ENCODE measurements at regions of chr19 and their contacts with region 1.

Region 1: DNA sequence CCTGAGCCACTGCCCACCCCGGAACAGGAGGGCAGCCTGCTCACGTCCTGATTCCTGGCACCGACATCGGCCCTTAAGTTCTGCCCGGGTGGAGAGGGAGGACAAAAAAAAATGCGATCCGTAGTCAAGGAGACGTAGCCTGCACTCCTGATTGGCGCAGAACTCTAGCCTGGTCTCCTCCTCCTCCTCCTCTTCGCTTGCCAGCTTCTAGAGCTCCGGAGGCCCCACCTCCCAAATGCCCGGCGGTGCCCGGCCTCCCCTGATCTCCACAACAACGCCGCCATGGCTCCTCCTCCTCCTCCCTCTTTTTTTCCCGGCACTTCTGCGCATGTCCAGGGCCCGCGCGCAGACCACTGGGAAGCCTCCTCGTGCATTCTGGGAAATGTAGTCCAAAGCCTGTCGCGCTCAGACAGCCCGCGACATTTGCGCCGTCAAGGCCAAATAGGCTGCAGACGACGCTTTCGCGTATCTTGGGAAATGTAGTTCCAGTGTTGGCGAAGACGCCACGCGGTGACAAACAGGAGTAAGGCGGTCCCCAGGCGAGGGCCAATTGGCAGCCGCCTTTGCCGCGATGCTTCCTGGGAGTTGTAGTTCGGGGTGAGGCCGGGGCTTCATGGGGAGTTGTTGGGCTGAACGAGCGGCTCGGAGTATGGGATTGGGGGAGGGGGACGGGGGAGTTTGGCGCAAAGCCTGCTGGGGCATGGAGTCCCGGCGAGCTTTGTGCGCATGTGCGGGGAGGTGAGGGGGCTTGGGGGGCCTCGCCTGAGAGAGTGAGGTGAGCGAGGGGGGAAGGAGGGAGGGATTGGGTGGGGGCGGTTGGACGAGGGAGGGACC is at the start of gene ZNF444:
- DNase-seq: peak; percentile 92 to 99
- ATAC-seq: peak; percentile 90 to 97 (median 94)
- H3K4me3 ChIP-seq: peak within 1 kb of the TSS; percentile 49
- H3K4me3 Mint-ChIP-seq: peak within 1 kb of the TSS; percentile 99
- H3K27ac ChIP-seq: peak within 1 kb of the TSS; percentile 66
- H3K27ac Mint-ChIP-seq: peak within 1 kb of the TSS; percentile 95
- H3K4me1 ChIP-seq: peaks cover 15% of the 10 kb centered on the region
- H3K4me1 Mint-ChIP-seq: peaks cover 27 to 40% of the 10 kb centered on the region in 2 donors
- H3K27me3 ChIP-seq: no peaks in the 10 kb centered on the region
- H3K27me3 Mint-ChIP-seq: no peaks in the 10 kb centered on the region
- CTCF ChIP-seq: no peak
- total RNA-seq, gene ZNF444: 14.5 to 21.9 (median 16.7) TPM

Region 2: DNA sequence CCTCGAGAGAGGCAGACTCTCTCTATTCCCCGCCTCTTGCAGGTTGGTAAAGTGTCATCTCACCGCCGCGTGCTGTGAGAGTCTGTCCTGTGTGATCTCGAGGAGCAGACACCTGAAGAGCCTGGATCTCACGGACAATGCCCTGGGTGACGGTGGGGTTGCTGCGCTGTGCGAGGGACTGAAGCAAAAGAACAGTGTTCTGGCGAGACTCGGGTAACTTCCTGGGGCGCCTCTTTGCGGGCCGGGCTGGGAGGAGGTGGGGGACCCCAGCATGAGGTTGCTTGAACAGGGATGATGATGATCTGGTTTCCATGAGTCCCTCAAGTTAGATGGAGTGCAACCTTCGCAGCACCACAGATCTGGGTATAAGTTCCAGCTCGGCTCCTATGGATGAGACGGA is 87.2 kb before region 1 on chr19:
- intact Hi-C with region 1: no loop called
- DNase-seq: no peak
- ATAC-seq: no peak
- H3K4me3 ChIP-seq: no peak overlapping the region
- H3K4me3 Mint-ChIP-seq: no peak overlapping the region
- H3K27ac ChIP-seq: no peak overlapping the region
- H3K27ac Mint-ChIP-seq: no peak overlapping the region
- H3K4me1 ChIP-seq: no peaks in the 10 kb centered on the region
- H3K4me1 Mint-ChIP-seq: no peaks in the 10 kb centered on the region
- H3K27me3 ChIP-seq: no peaks in the 10 kb centered on the region
- H3K27me3 Mint-ChIP-seq: peaks cover 4 to 7% of the 10 kb centered on the region in 2 donors
- CTCF ChIP-seq: no peak

Region 3: DNA sequence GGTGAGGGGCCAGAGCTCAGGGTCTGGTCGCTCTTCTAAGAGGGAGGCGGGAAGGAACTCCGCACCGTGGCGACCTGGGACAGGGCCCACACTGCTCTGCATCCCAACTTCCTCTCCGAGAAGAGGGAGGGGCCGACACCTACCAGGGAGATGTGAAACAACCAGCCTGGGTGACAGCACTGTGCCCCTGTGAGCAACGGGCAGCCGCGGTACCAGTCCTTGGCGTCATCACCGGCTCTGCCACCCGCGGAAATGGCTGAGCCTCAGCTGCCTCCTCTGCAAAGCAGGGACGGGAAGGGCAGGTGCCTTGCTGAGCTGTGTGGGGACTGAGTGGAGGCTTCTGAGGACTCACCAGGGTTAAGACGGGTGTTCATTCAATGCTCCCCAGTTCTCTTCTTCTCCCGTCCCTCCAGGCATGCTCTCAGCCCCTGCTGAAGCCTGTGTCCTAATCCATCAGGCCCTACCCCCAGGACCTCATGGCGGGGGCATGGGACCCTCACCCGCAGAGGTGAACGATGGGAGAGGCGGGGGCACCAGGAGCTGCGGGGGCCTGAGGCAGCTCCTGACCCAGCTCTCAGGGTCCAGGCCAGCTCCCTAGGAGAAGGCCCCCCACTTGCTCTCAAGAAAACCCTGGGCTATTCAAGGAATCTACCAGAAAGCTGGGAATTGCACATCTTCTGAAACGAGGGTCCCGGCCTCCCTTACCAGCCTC is 29.0 kb before region 1 on chr19:
- intact Hi-C with region 1: loop called (anchors 2 kb)
- DNase-seq: peak; percentile 66 to 70
- ATAC-seq: peak; percentile 95 to 99 (median 96)
- H3K4me3 ChIP-seq: no peak overlapping the region
- H3K4me3 Mint-ChIP-seq: peak overlapping the region; percentile 74
- H3K27ac ChIP-seq: peak overlapping the region; percentile 78
- H3K27ac Mint-ChIP-seq: peak overlapping the region; percentile 82 to 90
- H3K4me1 ChIP-seq: peaks cover 74% of the 10 kb centered on the region
- H3K4me1 Mint-ChIP-seq: peaks cover 44 to 55% of the 10 kb centered on the region in 2 donors
- H3K27me3 ChIP-seq: no peaks in the 10 kb centered on the region
- H3K27me3 Mint-ChIP-seq: no peaks in the 10 kb centered on the region
- CTCF ChIP-seq: no peak

Region 4: DNA sequence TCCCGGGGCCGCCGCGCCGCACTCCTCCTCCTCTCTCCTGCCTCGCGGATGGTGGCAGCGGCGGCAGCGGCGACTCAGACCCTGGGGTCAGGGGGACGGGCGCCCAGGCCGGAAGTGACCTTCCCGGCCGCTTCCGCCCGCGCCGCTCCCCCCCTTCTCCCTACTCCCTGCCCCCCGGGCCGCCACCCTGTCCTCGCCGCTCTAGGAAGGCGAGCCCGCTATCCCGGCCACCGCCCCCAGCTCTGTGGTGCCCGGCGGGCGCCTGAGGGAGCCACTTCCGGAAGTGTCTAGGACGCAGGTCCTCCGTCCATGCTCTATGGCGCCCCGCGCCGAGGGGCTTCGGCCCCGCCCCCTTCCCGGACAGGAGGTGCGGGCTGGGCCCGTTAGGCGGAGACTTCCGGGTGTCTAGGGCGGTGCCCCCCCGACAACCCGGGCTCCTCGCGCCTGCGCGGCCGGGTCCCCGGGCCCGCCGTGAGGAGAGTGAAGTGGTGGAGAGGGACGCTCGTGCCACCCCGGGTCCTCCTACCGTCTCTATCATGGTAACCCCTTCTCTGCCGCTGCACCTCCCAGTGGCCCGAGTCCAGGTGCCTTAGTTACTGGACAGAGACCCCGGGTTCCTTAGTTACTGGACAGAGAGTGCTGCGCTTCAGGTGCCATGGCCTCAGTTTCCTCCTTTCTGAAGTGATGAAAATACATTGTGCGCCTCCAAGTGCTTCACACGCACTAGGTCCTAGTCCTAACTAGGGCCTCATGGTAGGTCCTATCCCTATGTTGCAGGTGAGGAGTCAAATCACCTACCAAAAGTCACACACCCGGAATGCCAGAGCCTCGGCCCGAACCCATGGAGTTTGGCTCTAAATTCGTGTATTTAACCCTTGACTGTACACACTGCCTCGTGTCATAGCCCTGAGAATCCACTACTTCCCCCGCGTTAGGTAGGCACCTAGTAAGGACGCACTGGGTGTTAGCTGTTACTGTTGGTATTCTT is 19.3 kb before region 1 on chr19 and contains the start of gene ZNF787:
- intact Hi-C with region 1: loop called (anchors 1 kb)
- DNase-seq: peak; percentile 95 to 98
- ATAC-seq: peak; percentile 81 to 91 (median 83)
- H3K4me3 ChIP-seq: peak within 1 kb of the TSS; percentile 59
- H3K4me3 Mint-ChIP-seq: peak within 1 kb of the TSS; percentile 97
- H3K27ac ChIP-seq: peak within 1 kb of the TSS; percentile 95
- H3K27ac Mint-ChIP-seq: peak within 1 kb of the TSS; percentile 92 to 98
- H3K4me1 ChIP-seq: peaks cover 31% of the 10 kb centered on the region
- H3K4me1 Mint-ChIP-seq: peaks cover 21 to 37% of the 10 kb centered on the region in 2 donors
- H3K27me3 ChIP-seq: no peaks in the 10 kb centered on the region
- H3K27me3 Mint-ChIP-seq: no peaks in the 10 kb centered on the region
- CTCF ChIP-seq: no peak
- total RNA-seq, gene ZNF787: 23.9 to 42.0 (median 36.9) TPM

Region 5: GRCh38 chr19:56314562-56315077 is 173.8 kb after region 1 on chr19 and contains the start of gene ZSCAN5A:
- intact Hi-C with region 1: loop called (anchors 1 kb)
- DNase-seq: peak; percentile 94 to 98
- ATAC-seq: peak; percentile 77 to 89 (median 83)
- H3K4me3 ChIP-seq: peak within 1 kb of the TSS; percentile 77
- H3K4me3 Mint-ChIP-seq: peak within 1 kb of the TSS; percentile 98
- H3K27ac ChIP-seq: peak within 1 kb of the TSS; percentile 94
- H3K27ac Mint-ChIP-seq: peak within 1 kb of the TSS; percentile 97 to 98
- H3K4me1 ChIP-seq: peaks cover 13% of the 10 kb centered on the region
- H3K4me1 Mint-ChIP-seq: peaks cover 21 to 38% of the 10 kb centered on the region in 2 donors
- H3K27me3 ChIP-seq: no peaks in the 10 kb centered on the region
- H3K27me3 Mint-ChIP-seq: peaks cover 0 to under 1% of the 10 kb centered on the region in 2 donors
- CTCF ChIP-seq: no peak
- total RNA-seq, gene ZSCAN5A: 6.7 to 10.2 (median 7.9) TPM